Activated CD4-positive, alpha-beta T cell treated with anti-CD3 and anti-CD28 coated beads, Interleukin-2, amount 10 ng/mL, durations not matched to agents 7 days and 5 days (primary cell): ENCODE measurements at regions of chr17 and their contacts with region 1.

Region 1: GRCh38 chr17:5191541-5192417 is at the start of gene ZNF594:
- DNase-seq: peak; percentile 97
- H3K4me3 Mint-ChIP-seq: peak within 1 kb of the TSS; percentile 84
- H3K27ac Mint-ChIP-seq: peak within 1 kb of the TSS; percentile 91
- H3K4me1 Mint-ChIP-seq: peaks cover 32% of the 10 kb centered on the region
- H3K27me3 Mint-ChIP-seq: no peaks in the 10 kb centered on the region
- total RNA-seq, gene ZNF594: 11.3 to 11.6 TPM

Region 2: GRCh38 chr17:5181509-5182305 is 10.1 kb before region 1 on chr17:
- CTCF ChIA-PET with region 1: interaction called, 18 read pairs
- POLR2A ChIA-PET with region 1: no interaction called
- DNase-seq: no peak
- H3K4me3 Mint-ChIP-seq: no peak overlapping the region
- H3K27ac Mint-ChIP-seq: no peak overlapping the region
- H3K4me1 Mint-ChIP-seq: no peaks in the 10 kb centered on the region
- H3K27me3 Mint-ChIP-seq: no peaks in the 10 kb centered on the region

Region 3: GRCh38 chr17:5203908-5204294 is 12.1 kb after region 1 on chr17:
- CTCF ChIA-PET with region 1: no interaction called
- POLR2A ChIA-PET with region 1: no interaction called
- DNase-seq: no peak
- H3K4me3 Mint-ChIP-seq: no peak overlapping the region
- H3K27ac Mint-ChIP-seq: no peak overlapping the region
- H3K4me1 Mint-ChIP-seq: no peaks in the 10 kb centered on the region
- H3K27me3 Mint-ChIP-seq: no peaks in the 10 kb centered on the region